Ovary (tissue), 10 donors: ENCODE measurements at regions of chr14 and their contacts with region 1.

Region 1: DNA sequence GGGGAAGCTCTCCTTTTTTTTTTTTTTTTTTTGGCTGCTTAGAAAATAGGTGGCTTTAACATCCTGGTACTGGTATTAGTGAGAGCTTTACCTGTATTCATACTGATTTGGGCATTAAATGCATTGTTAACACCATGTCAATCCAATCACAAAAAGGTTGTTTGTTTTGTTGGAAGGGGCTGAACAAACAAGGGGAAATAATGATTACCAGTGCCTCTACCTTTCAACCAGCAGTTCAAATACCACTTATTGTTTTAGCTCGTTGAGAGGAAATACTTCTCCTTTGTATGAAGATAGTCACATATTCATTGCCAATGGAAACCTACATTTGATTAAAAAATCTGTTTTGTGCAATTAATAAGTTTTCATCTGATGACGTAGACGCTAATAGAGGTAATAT is 72.9 kb downstream of the MIPOL1 start:
- DNase-seq: no peak
- H3K4me3 ChIP-seq: no peak overlapping the region
- H3K27ac ChIP-seq: no peak overlapping the region
- H3K4me1 ChIP-seq: no peaks in the 10 kb centered on the region
- H3K27me3 ChIP-seq: no peaks in the 10 kb centered on the region
- CTCF ChIP-seq: no peak
- EP300 ChIP-seq: no peak
- POLR2A ChIP-seq: no peak

Region 2: DNA sequence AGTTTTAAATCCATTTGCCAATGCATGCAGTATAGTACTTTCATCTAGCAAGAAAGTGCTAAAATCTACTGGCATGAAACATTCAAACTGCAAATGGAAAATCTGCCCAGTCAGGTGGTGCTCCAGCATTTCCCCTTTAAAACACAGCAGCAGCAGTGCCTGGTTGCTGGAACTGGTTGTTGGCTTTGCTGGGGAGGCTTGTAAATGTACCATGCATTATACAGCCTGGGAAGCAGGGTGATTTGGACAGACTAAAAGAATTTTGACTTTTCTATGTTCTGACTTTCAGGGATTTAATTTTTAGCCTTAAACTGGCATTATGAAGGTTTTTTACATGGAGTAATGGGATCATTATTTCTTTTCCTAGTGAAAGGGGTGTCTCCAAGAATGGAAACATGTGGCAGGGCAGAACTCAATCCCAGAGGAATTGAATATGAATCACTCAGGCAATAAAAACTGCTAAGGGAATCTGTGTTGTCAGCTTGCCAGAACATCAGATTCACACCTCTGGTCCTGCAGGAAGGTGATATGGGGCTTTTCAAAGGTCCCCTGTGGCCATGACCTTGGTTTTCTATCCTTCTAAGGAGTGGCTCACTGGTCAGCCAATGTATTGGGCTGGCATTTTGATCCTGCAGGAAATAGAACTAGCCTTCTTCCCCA is 618.0 kb before region 1 on chr14:
- intact Hi-C with region 1: loop called in 1 of 4 experiments (anchors 5 kb)
- DNase-seq: no peak
- H3K4me3 ChIP-seq: no peak overlapping the region
- H3K27ac ChIP-seq: no peak overlapping the region
- H3K4me1 ChIP-seq: peaks cover 4% of the 10 kb centered on the region
- H3K27me3 ChIP-seq: peaks cover 3% of the 10 kb centered on the region
- CTCF ChIP-seq: no peak
- EP300 ChIP-seq: no peak
- POLR2A ChIP-seq: no peak